ENCODE measurements at regions of chr1 and their contacts with region 1.

Region 1: DNA sequence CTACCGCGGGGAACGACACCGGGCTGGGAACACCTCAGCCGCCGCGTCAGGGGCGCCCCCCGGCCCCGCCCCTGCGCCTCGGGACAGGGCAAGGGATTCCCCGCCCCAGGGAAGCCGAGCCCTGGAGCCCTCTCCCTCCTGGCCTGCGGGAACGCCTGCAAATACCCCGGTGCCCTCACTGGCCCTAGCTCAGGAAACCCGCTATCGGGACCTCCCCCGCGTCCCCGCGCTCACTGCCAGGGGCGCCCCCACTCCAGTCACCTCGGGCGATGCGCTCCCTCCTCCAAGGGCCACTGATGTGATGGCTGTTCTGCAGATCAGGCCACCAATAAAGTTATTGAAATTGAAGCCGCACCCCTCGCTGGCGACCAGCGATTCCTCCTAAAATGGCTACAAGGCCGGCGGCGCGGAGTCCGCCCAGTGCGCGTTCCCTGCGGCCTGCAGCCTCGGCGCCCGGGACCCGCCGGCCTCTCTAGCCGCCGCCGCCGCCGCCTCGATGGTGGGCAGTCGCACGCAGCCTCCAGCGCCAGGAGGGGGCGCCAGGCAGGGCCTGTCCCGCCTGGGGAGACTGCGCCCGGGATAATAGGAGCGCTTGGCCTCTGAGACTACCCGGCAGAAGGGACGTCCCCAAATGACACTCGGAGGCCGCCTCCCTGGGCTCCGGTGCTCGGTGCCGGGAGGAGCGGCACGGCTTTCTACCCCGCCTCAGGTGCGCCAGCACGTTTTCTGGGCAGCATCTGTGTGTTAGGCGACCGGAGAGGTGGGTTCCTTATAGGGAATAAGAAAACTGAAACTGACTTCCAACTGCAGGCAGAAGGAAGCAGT is at the start of gene PRKAB2:
- DNase-seq: peak; percentile 95 to 98
- H3K4me3 ChIP-seq: peak within 1 kb of the TSS; percentile 87 to 90
- H3K27ac ChIP-seq: peak within 1 kb of the TSS; percentile 94 to 96
- H3K4me1 ChIP-seq: peaks cover 0 to 60% (median 25%) of the 10 kb centered on the region in 4 donors
- H3K27me3 ChIP-seq: no peaks in the 10 kb centered on the region
- CTCF ChIP-seq: peak; percentile 86 to 95

Region 2: DNA sequence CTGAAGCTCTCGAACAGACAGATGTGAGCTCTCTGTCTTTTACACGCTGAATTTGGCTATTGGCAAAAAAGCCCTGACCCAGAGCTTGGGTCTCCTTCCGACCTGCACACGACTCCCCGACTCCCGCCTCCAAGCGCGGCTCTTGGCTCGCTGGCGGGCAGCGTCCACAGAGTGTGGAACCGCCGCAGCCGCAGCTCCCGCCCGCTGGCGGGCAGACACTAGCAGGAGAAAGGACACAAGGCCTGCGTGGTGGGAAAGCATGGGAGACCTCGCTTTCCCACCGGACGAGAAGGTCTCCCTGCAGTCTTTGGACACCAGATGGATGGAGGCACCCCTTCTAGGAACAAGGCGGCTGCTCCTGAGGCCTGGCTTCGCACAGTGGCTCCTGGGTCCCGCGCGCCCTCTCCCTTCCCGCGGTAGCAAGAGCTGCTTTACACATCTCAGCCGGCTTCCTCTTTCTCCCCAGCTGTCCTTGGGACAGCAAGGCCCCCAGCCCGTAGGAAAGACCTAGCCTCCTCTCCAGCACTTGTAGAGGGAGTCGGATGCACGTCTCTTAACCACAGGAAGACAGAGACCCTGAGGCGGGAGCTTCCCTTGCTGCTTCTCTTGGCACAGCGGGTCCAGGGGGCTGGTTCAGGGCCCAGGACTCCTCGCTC is 92.2 kb before region 1 on chr1:
- intact Hi-C with region 1: no loop called
- DNase-seq: no peak
- H3K4me3 ChIP-seq: no peak overlapping the region
- H3K27ac ChIP-seq: no peak overlapping the region
- H3K4me1 ChIP-seq: peaks cover 0 to 42% (median 30%) of the 10 kb centered on the region in 4 donors
- H3K27me3 ChIP-seq: peaks cover 4 to 68% of the 10 kb centered on the region in 2 donors
- CTCF ChIP-seq: no peak

Region 3: GRCh38 chr1:147242439-147243227 is 70.3 kb after region 1 on chr1 and contains the start of gene CHD1L:
- intact Hi-C with region 1: loop called (anchors 1 kb)
- DNase-seq: peak; percentile 95 to 98
- H3K4me3 ChIP-seq: peak within 1 kb of the TSS; percentile 98 to 99
- H3K27ac ChIP-seq: peak within 1 kb of the TSS; percentile 97 to 99
- H3K4me1 ChIP-seq: peaks cover 0 to 37% (median 9%) of the 10 kb centered on the region in 4 donors
- H3K27me3 ChIP-seq: no peaks in the 10 kb centered on the region
- CTCF ChIP-seq: peak; percentile 88 to 90